Activated B cell treated with CpG ODN at 0.5 μM for 24 hours (primary cell): ENCODE measurements at regions of chr2 and their contacts with region 1.

Region 1: DNA sequence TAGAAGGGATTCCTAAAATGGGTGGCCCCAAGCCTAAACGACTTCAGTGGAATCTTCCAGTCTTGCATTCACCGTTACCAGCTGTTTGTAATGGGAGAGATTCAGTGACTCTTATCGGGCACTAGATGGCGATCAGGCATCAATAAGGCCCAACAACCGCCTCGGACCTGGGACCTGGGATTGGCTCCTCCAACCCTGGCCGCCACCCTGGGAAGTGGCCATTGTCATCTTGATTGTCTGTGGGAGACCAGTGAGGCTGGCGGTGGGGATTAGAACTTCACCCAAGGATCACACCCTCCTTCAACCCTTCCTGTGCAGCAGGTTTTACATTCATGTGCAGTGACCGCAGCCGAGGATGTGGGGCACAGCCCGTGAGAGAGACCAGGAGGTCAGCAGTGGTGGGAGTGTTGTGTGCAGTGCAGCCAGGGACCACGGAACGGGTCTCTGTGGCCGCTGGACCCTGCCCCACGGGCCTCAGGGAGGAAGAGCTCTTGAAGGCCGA is 85.3 kb downstream of the SPP2 start:
- DNase-seq: peak; percentile 32
- ATAC-seq: peak; percentile 75
- H3K4me3 Mint-ChIP-seq: no peak overlapping the region
- H3K27ac Mint-ChIP-seq: peak overlapping the region; percentile 20
- H3K4me1 Mint-ChIP-seq: peaks cover 8% of the 10 kb centered on the region
- H3K27me3 Mint-ChIP-seq: peaks cover 30% of the 10 kb centered on the region
- CTCF ChIP-seq: no peak

Region 2: GRCh38 chr2:233976690-233977294 is 159.0 kb before region 1 on chr2:
- CTCF ChIA-PET with region 1: no interaction called
- POLR2A ChIA-PET with region 1: no interaction called
- intact Hi-C with region 1: loop called (anchors 2 kb)
- DNase-seq: no peak
- ATAC-seq: peak; percentile 45
- H3K4me3 Mint-ChIP-seq: no peak overlapping the region
- H3K27ac Mint-ChIP-seq: no peak overlapping the region
- H3K4me1 Mint-ChIP-seq: no peaks in the 10 kb centered on the region
- H3K27me3 Mint-ChIP-seq: peaks cover 34% of the 10 kb centered on the region
- CTCF ChIP-seq: no peak

Region 3: GRCh38 chr2:234164493-234165413 is 29.0 kb after region 1 on chr2:
- CTCF ChIA-PET with region 1: interaction called, 16 read pairs
- POLR2A ChIA-PET with region 1: no interaction called
- intact Hi-C with region 1: loop called (anchors 1 kb)
- DNase-seq: peak; percentile 62
- ATAC-seq: peak; percentile 97
- H3K4me3 Mint-ChIP-seq: peak overlapping the region; percentile 48
- H3K27ac Mint-ChIP-seq: peak overlapping the region; percentile 74
- H3K4me1 Mint-ChIP-seq: peaks cover 54% of the 10 kb centered on the region
- H3K27me3 Mint-ChIP-seq: peaks cover 3% of the 10 kb centered on the region
- CTCF ChIP-seq: no peak

Region 4: DNA sequence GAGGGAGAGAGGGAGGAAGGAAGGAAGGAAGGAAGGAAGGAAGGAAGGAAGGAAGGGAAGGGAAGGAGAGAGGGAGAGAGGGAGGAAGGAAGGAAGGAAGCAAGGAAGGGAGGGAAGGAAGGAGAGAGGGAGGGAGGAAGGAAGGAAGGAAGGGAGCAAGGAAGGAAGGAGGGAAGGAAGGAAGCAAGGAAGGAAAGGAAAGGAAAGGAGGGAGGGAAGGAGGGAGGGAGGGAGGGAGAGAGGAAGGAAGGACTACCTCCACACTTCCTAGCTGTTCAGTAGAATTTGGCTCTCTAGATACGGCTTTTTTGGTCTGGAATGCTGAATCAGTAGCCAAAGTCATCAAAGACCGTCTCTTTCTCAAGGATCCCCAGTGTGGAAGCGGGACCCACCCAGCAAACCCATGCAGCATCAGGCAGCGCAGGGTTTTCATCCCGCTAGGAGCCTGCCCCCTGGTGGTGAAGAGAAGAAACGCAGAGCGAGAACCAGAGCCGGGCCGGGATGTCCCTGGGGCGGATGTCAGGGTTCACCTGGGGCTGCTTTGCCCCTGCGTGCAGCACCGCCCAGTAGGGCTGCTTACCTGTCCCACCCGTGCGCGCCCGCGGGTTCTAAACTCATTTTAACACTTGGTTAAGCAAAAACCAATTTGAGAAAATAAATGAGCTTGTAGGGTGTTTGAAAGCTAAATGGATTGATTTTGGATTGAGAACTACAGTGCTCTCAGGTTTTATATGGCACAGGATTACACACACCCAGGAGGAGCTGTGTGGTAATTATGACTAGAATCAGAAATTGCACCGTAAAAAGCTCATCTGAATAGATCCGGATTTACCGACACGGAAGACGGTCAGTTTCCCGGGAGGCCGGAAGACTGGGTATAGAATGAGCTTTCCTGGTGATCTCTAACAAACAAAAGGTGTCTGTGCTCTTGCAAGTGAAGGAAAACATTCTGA is 409.2 kb after region 1 on chr2:
- CTCF ChIA-PET with region 1: interaction called, 21 read pairs
- POLR2A ChIA-PET with region 1: interaction called, 3 read pairs
- intact Hi-C with region 1: loop called (anchors 1 kb)
- DNase-seq: peak; percentile 56
- ATAC-seq: peak; percentile 84
- H3K4me3 Mint-ChIP-seq: no peak overlapping the region
- H3K27ac Mint-ChIP-seq: no peak overlapping the region
- H3K4me1 Mint-ChIP-seq: no peaks in the 10 kb centered on the region
- H3K27me3 Mint-ChIP-seq: peaks cover 37% of the 10 kb centered on the region
- CTCF ChIP-seq: peak; percentile 33